Adrenal gland (tissue), 19 donors: ENCODE measurements at regions of chr6 and their contacts with region 1.

Region 1: GRCh38 chr6:30396833-30397479 is 52.0 kb downstream of the RPP21 start:
- DNase-seq: peak; percentile 74 to 89 (median 85)
- H3K4me3 ChIP-seq: no peak overlapping the region
- H3K27ac ChIP-seq: no peak overlapping the region
- H3K4me1 ChIP-seq: peaks cover 0 to 4% of the 10 kb centered on the region in 2 donors
- H3K27me3 ChIP-seq: peaks cover 14% of the 10 kb centered on the region
- CTCF ChIP-seq: peak; percentile 70 to 86 (median 82)
- POLR2A ChIP-seq: no peak

Region 2: DNA sequence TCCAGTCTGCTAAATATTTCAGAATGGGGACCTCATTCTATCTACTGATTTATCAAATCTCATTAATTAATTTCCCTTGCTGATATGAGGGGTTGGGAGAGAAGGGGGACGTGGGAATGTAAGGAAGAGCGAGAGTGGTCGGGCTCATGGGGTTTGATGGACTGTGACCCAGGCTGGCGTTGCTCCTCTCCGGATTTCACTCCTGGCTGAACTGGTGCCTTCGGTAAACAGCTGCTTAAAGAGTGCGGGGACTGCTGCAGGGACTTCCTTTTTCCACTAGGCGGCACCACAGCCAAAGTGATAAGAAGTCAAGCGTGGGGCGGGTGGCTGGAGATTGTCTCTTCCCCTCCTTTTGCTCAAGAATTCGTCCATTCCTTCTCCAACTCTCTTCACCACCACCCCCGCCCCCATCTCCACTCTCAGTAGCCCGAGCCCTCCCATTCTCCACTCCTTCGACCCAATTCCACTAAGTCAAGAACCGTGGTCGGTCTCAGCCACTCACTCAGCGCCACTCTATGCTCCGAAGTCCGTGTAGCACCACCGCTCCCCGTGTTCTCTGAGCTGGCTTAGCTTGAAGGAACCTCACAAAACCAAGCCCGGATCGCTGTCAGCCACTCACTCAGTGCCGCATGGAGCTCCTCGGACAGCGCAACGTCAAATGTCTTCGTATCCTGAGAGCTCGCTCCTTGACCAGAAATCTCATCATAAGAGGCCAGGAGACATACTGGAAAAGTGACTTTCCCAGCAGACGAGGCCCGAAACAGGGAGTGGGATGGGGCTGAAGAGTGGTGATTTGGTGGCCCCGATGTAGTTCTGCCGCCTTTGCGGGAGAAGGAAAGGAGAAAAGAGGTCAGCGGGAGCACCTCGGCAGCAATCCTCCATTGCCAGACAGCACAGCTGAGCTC is 293.7 kb before region 1 on chr6:
- intact Hi-C with region 1: no loop called
- DNase-seq: peak; percentile 85 to 97 (median 94)
- H3K4me3 ChIP-seq: peak overlapping the region in 3 of 4 donors; percentile 29 to 60 (median 31)
- H3K27ac ChIP-seq: peak overlapping the region in 3 of 5 donors; percentile 73 to 86 (median 81)
- H3K4me1 ChIP-seq: peaks cover 18 to 25% of the 10 kb centered on the region in 2 donors
- H3K27me3 ChIP-seq: no peaks in the 10 kb centered on the region
- CTCF ChIP-seq: peak; percentile 86 to 98 (median 96)
- POLR2A ChIP-seq: peak in 1 of 2 donors; percentile 62

Region 3: DNA sequence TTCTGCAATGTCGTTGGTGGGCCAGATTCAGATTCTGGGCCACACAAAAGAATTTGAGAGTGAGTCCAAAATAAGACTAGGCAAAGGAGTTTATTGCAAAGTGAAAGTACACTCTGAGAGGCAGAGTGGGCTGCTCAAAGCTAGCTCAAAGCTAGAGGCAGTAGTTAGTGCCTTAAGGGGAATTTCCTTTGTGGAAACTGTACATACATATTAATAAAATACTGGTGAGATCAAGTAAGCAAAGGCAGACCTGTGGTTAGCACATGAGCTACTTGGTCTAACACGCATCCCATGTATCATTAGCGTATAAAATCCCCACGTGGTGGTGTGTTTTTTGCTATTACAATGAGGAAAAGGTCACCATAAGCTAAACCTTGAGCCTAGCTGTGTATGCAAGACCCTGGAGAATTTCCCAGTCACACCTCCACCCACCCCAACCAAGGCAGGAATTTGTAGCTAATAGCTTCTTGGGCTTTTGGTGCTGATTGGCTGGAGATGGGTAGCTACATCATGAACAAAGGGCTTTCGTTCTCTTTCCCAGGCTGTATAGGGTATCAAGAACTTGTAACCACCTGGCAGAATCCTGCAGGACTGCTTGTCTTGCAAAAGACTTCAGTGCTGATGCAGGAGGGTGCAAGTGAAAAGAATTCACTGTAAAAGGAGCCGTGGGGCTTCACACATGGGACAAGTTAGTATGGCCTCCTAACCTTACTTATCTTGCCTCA is 169.0 kb before region 1 on chr6:
- intact Hi-C with region 1: loop called in 1 of 2 experiments (anchors 10 kb)
- DNase-seq: no peak
- H3K4me3 ChIP-seq: no peak overlapping the region
- H3K27ac ChIP-seq: no peak overlapping the region
- H3K4me1 ChIP-seq: no peaks in the 10 kb centered on the region
- H3K27me3 ChIP-seq: no peaks in the 10 kb centered on the region
- CTCF ChIP-seq: no peak
- POLR2A ChIP-seq: no peak

Region 4: DNA sequence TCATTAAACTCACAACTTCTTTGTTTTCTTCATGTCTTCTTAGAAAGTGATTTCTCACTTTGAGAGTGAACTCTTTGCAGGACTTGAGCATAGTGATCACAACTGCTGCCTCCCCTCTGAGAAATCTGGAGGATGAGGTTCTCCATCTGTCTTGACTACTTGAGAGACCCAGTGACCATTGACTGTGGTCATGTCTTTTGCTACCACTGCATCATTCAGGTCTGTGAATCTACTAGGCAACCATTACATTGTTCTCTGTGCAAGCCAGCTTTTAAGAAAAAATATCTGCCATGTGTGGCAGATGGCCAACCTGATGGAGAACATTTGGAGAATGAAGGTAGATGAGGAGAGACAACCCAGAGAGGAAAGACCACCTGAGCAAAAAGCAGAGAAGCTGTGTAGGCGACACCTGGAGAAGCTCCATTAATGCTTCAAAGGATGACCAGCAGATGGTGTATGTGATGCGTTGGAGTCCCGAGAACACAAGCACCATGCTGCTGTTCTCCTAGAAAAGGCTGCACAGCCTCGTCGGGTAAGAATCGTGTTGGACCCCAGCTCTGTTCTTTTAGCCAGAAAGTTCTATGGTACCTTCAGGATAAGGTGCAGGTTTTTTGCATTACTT is 158.7 kb before region 1 on chr6:
- intact Hi-C with region 1: loop called in 1 of 2 experiments (anchors 5 kb)
- DNase-seq: peak in 3 of 7 donors; percentile 35 to 61 (median 44)
- H3K4me3 ChIP-seq: no peak overlapping the region
- H3K27ac ChIP-seq: no peak overlapping the region
- H3K4me1 ChIP-seq: no peaks in the 10 kb centered on the region
- H3K27me3 ChIP-seq: no peaks in the 10 kb centered on the region
- CTCF ChIP-seq: peak; percentile 13 to 49 (median 40)
- POLR2A ChIP-seq: no peak

Region 5: DNA sequence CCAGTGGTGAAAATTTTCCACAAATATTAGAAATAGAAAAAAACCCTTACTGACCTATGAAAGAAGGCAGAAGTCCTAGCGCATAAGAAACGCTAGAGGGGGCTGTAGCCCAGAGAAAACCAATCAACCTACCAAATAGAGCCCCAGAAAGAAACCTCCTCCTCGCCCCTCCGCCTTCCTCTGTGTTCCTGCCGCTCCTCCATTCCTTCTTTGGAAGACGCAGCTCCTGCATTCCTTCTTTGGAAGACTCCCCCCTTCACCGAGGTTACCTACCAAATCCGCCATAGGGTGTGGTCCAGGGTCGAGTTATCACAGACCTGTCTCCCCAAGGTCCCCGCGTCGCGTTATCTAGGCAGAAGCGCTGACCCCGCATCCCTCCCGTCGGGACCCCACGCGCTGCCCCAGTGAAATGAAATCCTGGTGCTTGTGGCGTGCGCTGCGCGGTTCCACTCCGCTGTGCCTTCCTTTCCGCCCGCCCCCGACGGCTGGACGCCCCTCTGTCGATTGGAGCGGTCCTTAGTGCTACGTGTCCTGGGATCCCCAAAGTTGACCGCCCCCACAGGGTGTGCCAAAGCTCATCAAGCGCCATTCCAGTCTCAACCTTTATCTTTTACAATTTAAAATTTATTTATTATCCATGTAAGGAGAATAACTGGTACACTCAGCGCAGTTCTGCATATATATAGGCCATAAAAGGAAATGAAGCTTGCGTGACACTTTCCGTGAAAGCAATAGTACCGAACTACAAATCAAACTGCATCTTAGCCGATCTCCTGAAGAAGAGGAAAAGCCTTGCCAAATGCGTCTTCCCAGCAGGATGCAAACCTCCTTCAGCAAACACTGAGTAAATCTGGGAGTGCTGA is 39.0 kb before region 1 on chr6:
- intact Hi-C with region 1: loop called in 1 of 2 experiments (anchors 2 kb)
- DNase-seq: peak; percentile 29 to 77 (median 55)
- H3K4me3 ChIP-seq: peak overlapping the region in 1 of 4 donors; percentile 40
- H3K27ac ChIP-seq: no peak overlapping the region
- H3K4me1 ChIP-seq: peaks cover 0 to 5% of the 10 kb centered on the region in 2 donors
- H3K27me3 ChIP-seq: peaks cover 39% of the 10 kb centered on the region
- CTCF ChIP-seq: peak; percentile 44 to 69 (median 55)
- POLR2A ChIP-seq: no peak

Region 6: GRCh38 chr6:30814136-30815040 is 417.4 kb after region 1 on chr6:
- intact Hi-C with region 1: no loop called
- DNase-seq: peak; percentile 45 to 78 (median 67)
- H3K4me3 ChIP-seq: no peak overlapping the region
- H3K27ac ChIP-seq: peak overlapping the region in 2 of 5 donors; percentile 73 to 81
- H3K4me1 ChIP-seq: peaks cover 11 to 23% of the 10 kb centered on the region in 2 donors
- H3K27me3 ChIP-seq: no peaks in the 10 kb centered on the region
- CTCF ChIP-seq: no peak
- POLR2A ChIP-seq: no peak